ENCODE measurements at regions of chr9 and their contacts with region 1.

Region 1: GRCh38 chr9:6008169-6008979 is 7.0 kb downstream of the RANBP6 start:
- DNase-seq: peak; percentile 85 to 93
- H3K4me3 ChIP-seq: peak overlapping the region; percentile 42 to 80 (median 70)
- H3K27ac ChIP-seq: peak overlapping the region; percentile 66; the same call in 1 of the 2 replicates
- H3K4me1 ChIP-seq: no peaks in the 10 kb centered on the region
- H3K27me3 ChIP-seq: no peaks in the 10 kb centered on the region
- CTCF ChIP-seq: no peak
- EP300 ChIP-seq: no peak
- POLR2A ChIP-seq: peak; percentile 65 to 74
- RAD21 ChIP-seq: no peak

Region 2: GRCh38 chr9:5988265-5988664 is 20.1 kb before region 1 on chr9:
- CTCF ChIA-PET with region 1: no interaction called
- POLR2A ChIA-PET with region 1: no interaction called
- DNase-seq: no peak
- H3K4me3 ChIP-seq: no peak overlapping the region
- H3K27ac ChIP-seq: no peak overlapping the region
- H3K4me1 ChIP-seq: no peaks in the 10 kb centered on the region
- H3K27me3 ChIP-seq: no peaks in the 10 kb centered on the region
- CTCF ChIP-seq: no peak
- EP300 ChIP-seq: no peak
- POLR2A ChIP-seq: no peak
- RAD21 ChIP-seq: no peak

Region 3: GRCh38 chr9:6024020-6024554 is 15.7 kb after region 1 on chr9:
- CTCF ChIA-PET with region 1: interaction called, 12 read pairs
- POLR2A ChIA-PET with region 1: interaction called, 6 read pairs
- DNase-seq: peak in 1 of 2 experiments; percentile 50
- H3K4me3 ChIP-seq: no peak overlapping the region; a peak in 1 of 8 replicates
- H3K27ac ChIP-seq: no peak overlapping the region
- H3K4me1 ChIP-seq: peaks cover 0 to 2% (median 0%) of the 10 kb centered on the region in 4 experiments; a peak in 1 of 7 replicates
- H3K27me3 ChIP-seq: no peaks in the 10 kb centered on the region
- CTCF ChIP-seq: peak in 2 of 3 experiments; percentile 21 to 59; a peak in 3 of 4 replicates
- EP300 ChIP-seq: no peak
- POLR2A ChIP-seq: no peak
- RAD21 ChIP-seq: peak; percentile 0 to 3; a peak in 1 of 4 replicates

Region 4: GRCh38 chr9:6080154-6080716 is 71.9 kb after region 1 on chr9:
- CTCF ChIA-PET with region 1: no interaction called
- POLR2A ChIA-PET with region 1: interaction called, 10 read pairs
- DNase-seq: peak; percentile 92 to 99
- H3K4me3 ChIP-seq: peak overlapping the region in 3 of 4 experiments; percentile 15 to 49 (median 41); a peak in 4 of 8 replicates
- H3K27ac ChIP-seq: 0 out of 2 replicates have a peak overlapping the region, but pooled peaks have one; percentile 46
- H3K4me1 ChIP-seq: peaks cover 0 to 12% (median 5%) of the 10 kb centered on the region in 4 experiments; a peak in 3 of 7 replicates
- H3K27me3 ChIP-seq: no peaks in the 10 kb centered on the region
- CTCF ChIP-seq: peak in 2 of 3 experiments; percentile 0 to 16; a peak in 2 of 4 replicates
- EP300 ChIP-seq: no peak
- POLR2A ChIP-seq: peak in 1 of 2 experiments; percentile 86; a peak in 2 of 3 replicates
- RAD21 ChIP-seq: peak in 1 of 2 experiments; percentile 5; a peak in 1 of 4 replicates

Region 5: GRCh38 chr9:6215562-6215961 is 207.2 kb after region 1 on chr9 and contains the start of gene IL33:
- CTCF ChIA-PET with region 1: no interaction called
- POLR2A ChIA-PET with region 1: no interaction called
- DNase-seq: no peak
- H3K4me3 ChIP-seq: no peak within 1 kb of the TSS
- H3K27ac ChIP-seq: no peak within 1 kb of the TSS
- H3K4me1 ChIP-seq: no peaks in the 10 kb centered on the region
- H3K27me3 ChIP-seq: no peaks in the 10 kb centered on the region
- CTCF ChIP-seq: no peak
- EP300 ChIP-seq: no peak
- POLR2A ChIP-seq: no peak
- RAD21 ChIP-seq: no peak
- total RNA-seq, gene IL33: not detected in 2 replicates

Measured in H1 (cell line).